Right ventricle myocardium inferior (tissue), 1 donor: ENCODE measurements at regions of chr15 and their contacts with region 1.

Region 1: GRCh38 chr15:38002883-38003477 is 68.5 kb downstream of the TMCO5A start:
- DNase-seq: no peak
- ATAC-seq: peak; percentile 55

Region 2: DNA sequence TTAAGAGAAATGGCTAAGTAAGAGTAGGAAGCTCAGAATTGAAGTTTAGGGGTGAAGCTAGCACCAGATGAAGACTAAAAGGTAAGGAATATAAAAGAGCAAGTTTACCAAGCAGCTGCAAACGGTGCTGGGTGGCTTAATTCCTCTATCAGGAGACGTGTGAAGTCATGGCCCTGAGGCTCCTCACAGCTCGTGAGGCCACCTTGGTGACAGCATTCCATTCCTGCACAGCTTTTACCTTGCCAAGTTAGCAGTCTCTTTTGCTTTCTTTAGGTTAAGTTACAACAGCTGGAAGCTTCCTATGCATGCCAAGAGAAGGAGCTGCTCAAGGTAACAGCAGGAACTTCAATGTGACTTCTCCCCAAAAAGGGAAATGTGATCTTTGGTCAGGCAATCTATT is 62.1 kb before region 1 on chr15:
- intact Hi-C with region 1: no loop called
- DNase-seq: no peak
- ATAC-seq: no peak

Region 3: GRCh38 chr15:38072348-38073177 is 69.6 kb after region 1 on chr15:
- intact Hi-C with region 1: loop called (anchors 5 kb)
- DNase-seq: peak; percentile 86
- ATAC-seq: peak; percentile 91

Region 4: DNA sequence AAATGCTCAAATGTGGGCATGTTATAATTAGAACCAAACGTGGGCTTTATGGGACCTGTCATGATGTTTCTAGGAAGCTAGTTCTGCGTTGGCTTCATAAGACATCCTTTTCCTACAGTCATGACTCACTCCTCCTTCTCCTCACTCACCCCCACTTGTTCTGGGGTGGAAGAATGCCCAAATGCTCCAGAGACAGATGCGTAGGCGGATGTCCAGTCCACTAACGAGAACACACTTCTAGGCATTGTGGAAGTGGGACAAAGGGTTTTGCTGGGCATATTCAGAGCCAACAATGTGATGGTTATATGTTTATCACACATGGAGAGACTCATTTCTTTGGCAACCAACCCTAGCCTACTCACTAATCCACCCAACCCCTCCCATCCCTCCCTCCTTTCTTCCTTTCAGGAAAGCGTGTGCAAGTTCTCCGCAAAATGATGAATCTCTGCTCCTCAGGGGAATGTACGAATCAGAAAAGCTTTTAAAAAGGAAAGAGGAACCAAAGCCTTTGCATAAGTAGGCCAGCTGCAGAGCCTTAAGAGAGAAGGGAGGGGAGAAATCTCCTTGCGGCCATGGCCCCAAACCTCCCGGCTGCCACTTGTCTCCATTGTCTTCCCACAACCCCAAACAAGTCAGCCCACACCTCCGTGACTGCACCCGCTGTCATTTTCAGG is 126.7 kb after region 1 on chr15:
- intact Hi-C with region 1: loop called (anchors 5 kb)
- DNase-seq: peak; percentile 74
- ATAC-seq: peak; percentile 87

Region 5: DNA sequence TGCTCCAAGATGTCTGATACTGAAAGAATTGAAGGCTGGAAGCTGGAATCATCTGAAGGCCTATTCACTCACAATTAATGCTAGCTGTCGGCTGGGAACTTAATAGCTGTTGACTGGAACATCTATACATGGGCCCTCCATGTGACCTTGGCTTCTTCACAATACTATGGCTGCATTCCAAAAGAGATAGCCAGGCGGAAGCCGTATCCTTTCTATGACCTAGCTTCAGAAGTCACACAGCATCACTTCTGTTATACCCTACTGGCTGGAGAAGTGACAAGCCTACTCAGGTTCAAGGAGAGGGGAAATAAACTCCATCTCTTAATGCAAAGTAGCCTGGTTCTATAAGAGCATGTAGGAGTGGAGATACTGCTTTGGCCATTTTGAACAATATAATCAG is 198.7 kb after region 1 on chr15:
- intact Hi-C with region 1: loop called (anchors 10 kb)
- DNase-seq: no peak
- ATAC-seq: peak; percentile 69

Region 6: DNA sequence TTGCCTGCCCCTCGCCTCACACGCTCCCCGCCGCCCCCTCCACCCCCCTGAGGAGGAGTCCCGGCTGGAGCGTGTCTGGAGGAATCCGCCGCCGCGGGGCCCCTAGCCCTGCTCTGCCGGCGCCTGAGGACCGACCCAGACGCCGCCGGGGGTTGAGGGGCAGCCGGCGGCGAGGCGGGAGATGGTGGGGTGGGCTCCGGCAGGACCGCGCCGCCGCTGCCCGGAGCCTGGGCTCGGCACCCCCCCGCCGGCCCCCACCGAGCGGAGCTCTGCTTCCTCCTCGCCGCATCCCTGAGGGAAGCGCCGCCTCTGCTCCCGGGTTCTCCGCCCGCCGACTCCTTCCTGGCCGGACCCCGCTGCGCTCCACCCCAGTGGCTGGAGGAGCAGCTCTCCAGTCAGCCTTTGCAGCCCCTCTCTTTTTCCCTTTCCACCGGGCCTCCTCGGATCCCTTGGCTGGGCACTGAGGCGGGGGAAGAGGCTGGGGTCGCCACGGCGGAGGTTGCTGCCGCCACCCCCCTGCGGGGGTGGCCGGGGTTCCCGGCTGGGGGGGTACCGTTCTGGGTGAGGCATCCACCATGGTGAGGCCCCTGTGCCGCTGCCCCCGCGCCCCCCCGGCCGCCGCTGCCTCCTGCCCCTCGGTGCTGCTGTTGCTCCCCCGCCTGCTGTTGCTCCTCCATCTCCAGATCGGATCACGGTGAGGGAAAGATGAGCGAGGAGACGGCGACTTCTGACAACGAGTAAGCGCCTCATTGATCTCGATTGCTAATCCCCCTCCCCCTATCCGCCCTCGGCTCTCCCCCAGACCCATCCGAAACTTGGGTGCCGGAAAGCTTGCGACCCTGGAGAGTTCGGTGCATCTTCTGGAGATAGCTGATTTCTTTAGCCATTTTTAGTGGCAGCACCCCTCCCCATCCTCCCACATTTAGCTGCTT is 249.8 kb after region 1 on chr15 and contains the start of gene SPRED1:
- intact Hi-C with region 1: loop called (anchors 5 kb)
- DNase-seq: peak; percentile 87
- ATAC-seq: peak; percentile 78
- total RNA-seq, gene SPRED1: 9.9 TPM

Region 7: GRCh38 chr15:38354315-38354929 is 351.4 kb after region 1 on chr15:
- intact Hi-C with region 1: loop called (anchors 2 kb)
- DNase-seq: no peak
- ATAC-seq: peak; percentile 56

Region 8: GRCh38 chr15:38414357-38414756 is 411.4 kb after region 1 on chr15:
- intact Hi-C with region 1: loop called (anchors 2 kb)
- DNase-seq: no peak
- ATAC-seq: peak; percentile 87